Mammary epithelial cell (primary cell): ENCODE measurements at regions of chr7 and their contacts with region 1.

Region 1: GRCh38 chr7:152193880-152194279 is 168.4 kb downstream of the GALNT11 start:
- DNase-seq: no peak
- H3K4me3 ChIP-seq: no peak overlapping the region
- H3K27ac ChIP-seq: no peak overlapping the region
- H3K4me1 ChIP-seq: no peaks in the 10 kb centered on the region
- H3K27me3 ChIP-seq: no peaks in the 10 kb centered on the region
- CTCF ChIP-seq: no peak

Region 2: DNA sequence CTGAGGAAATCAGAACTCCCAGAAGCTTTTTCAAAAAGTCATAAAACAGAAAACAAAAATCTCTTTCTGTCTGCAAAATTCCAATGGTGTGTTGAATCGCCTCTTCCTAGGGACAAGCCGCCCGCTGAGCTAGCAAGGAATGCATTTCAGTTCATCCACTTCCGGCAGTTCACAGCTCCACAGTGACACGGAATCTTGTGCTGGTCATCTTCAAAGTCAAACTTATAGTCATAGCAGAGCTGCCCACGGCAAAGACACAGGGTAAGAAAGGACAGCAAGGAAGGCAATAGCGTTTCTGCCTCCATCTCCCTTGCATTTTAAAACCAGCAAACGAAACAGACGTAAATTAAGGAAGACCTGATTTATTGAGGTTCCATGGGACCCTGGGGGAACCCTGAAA is 57.2 kb before region 1 on chr7:
- CTCF ChIA-PET with region 1: no interaction called
- dilution Hi-C with region 1: loop called (anchors 10 kb)
- in situ Hi-C with region 1: no loop called
- intact Hi-C with region 1: no loop called
- DNase-seq: no peak
- H3K4me3 ChIP-seq: no peak overlapping the region
- H3K27ac ChIP-seq: no peak overlapping the region
- H3K4me1 ChIP-seq: no peaks in the 10 kb centered on the region
- H3K27me3 ChIP-seq: no peaks in the 10 kb centered on the region
- CTCF ChIP-seq: no peak

Region 3: GRCh38 chr7:152709287-152710152 is 515.6 kb after region 1 on chr7:
- CTCF ChIA-PET with region 1: no interaction called
- dilution Hi-C with region 1: no loop called
- in situ Hi-C with region 1: no loop called
- intact Hi-C with region 1: loop called (anchors 5 kb)
- DNase-seq: peak; percentile 64
- H3K4me3 ChIP-seq: no peak overlapping the region
- H3K27ac ChIP-seq: no peak overlapping the region
- H3K4me1 ChIP-seq: no peaks in the 10 kb centered on the region
- H3K27me3 ChIP-seq: no peaks in the 10 kb centered on the region
- CTCF ChIP-seq: no peak